PC-9 (cell line): ENCODE measurements at regions of chr12 and their contacts with region 1.

Region 1: DNA sequence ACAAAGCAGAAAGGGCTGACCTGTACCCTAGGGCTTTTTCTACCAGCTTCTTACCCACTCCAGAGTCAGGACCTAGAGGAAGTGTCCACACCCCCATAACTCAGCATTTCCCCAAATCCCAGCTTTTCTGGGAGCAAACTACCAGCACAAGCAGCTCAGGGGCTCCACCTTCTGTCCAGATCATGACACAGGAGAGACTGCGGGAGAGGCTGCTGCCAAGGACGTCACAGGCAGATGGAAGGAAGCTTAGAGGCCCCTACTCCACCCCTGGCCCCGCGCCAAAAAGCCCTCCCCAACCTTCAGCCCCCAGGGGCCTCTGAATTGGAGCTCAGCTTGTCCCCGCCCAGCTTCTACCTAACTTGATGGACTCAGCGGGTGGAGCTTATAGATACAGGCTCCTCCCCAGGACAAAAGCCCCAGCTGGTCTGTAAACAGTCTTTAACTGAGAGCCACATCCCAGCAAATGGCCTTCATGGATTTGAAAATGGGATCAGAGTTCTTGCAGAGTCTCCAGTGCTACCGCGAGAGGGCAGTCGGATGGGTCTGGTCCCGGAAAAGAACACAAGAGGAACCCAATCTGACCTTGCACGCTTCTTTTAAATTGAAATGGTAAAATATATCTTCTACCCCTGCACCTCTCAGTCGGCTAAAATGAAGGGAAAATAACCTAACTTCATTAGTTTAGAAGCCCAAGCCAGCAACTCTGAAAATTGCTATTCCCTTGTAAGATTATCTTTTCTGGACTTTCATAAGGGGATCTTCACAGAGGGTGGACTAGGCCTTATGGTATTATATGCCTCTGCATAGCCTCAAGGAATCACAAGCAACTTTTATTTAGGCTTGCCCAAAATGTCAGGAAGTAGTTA is 6.8 kb upstream of the BAZ2A start:
- DNase-seq: peak; percentile 98 to 99
- H3K4me3 ChIP-seq: peak overlapping the region; percentile 91
- H3K27ac ChIP-seq: peak overlapping the region; percentile 58
- H3K4me1 ChIP-seq: peaks cover 25% of the 10 kb centered on the region
- H3K27me3 ChIP-seq: no peaks in the 10 kb centered on the region
- CTCF ChIP-seq: peak; percentile 71

Region 2: GRCh38 chr12:55738123-55739024 is 898.5 kb before region 1 on chr12:
- CTCF ChIA-PET with region 1: no interaction called
- POLR2A ChIA-PET with region 1: no interaction called
- intact Hi-C with region 1: loop called (anchors 5 kb)
- DNase-seq: peak; percentile 68 to 71
- H3K4me3 ChIP-seq: peak overlapping the region; percentile 74
- H3K27ac ChIP-seq: no peak overlapping the region
- H3K4me1 ChIP-seq: peaks cover 12% of the 10 kb centered on the region
- H3K27me3 ChIP-seq: no peaks in the 10 kb centered on the region
- CTCF ChIP-seq: peak; percentile 90

Region 3: DNA sequence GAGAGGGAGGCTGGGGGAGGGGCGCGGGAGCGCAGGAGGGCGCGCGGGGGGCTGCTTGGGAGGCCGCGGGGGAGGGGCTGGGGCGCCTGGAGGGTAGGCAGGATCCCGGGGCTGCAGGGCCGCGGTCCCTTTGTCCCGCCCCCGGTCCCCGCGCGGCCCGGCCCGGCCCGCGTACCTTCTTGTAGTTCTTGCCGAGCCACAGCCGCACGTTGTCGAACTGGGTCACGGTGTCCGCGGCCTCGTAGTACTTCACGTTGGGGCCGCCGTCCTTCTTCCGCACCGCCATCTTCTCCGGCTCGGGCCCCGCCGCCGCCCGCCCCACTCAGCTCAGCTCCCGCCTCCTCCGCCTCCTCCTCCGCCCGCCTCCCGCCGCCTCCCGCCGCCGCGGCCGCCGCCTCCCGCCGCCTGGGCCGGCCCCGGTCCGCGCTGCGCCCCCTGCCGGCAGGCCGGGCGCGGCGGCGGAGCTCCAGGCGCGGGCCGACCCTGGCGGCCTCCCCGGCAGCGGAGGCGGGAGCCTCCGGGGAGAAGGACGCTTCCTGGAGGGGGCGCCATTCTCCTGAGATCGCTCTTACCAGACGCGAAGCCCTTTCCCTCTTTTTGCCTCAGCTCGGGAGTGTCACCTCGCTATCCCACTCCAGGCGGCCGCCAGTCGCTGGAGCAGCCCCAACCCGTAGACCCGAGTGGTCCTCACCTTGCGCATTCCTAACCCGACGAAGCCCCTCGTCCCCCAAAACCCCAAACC is 447.6 kb before region 1 on chr12 and contains the start of gene SMARCC2:
- CTCF ChIA-PET with region 1: interaction called, 7 read pairs
- POLR2A ChIA-PET with region 1: no interaction called
- intact Hi-C with region 1: loop called (anchors 10 kb)
- DNase-seq: peak; percentile 71 to 91
- H3K4me3 ChIP-seq: peak within 1 kb of the TSS; percentile 99
- H3K27ac ChIP-seq: peak within 1 kb of the TSS; percentile 85
- H3K4me1 ChIP-seq: peaks cover 28% of the 10 kb centered on the region
- H3K27me3 ChIP-seq: no peaks in the 10 kb centered on the region
- CTCF ChIP-seq: peak; percentile 68
- total RNA-seq, gene SMARCC2: 70.3 and 86.4 TPM in 2 replicates

Region 4: GRCh38 chr12:56571126-56571525 is 65.8 kb before region 1 on chr12:
- CTCF ChIA-PET with region 1: interaction called, 15 read pairs
- POLR2A ChIA-PET with region 1: no interaction called
- intact Hi-C with region 1: no loop called
- DNase-seq: no peak
- H3K4me3 ChIP-seq: no peak overlapping the region
- H3K27ac ChIP-seq: no peak overlapping the region
- H3K4me1 ChIP-seq: peaks cover 29% of the 10 kb centered on the region
- H3K27me3 ChIP-seq: no peaks in the 10 kb centered on the region
- CTCF ChIP-seq: no peak

Region 5: DNA sequence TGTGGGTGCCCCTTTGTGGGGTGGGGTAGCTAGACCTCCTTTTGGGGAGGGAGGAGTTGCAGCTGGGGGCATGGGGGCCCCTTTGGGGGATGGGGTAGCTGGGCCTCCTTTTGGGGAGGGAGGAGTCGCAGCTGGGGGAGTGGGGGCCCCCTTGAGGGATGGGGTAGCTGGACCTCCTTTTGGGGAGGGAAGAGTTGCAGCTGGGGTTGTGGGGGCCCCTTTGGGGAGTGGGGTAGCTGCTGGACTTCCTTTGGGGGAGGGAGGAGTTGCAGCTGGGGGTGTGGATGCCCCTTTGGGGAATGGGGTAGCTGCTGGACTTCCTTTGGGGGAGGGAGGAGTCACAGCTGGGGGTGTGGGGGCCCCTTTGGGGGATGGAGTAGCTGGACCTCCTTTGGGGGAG is 81.2 kb after region 1 on chr12:
- CTCF ChIA-PET with region 1: interaction called, 5 read pairs
- POLR2A ChIA-PET with region 1: interaction called, 23 read pairs
- intact Hi-C with region 1: no loop called
- DNase-seq: no peak
- H3K4me3 ChIP-seq: no peak overlapping the region
- H3K27ac ChIP-seq: no peak overlapping the region
- H3K4me1 ChIP-seq: peaks cover 46% of the 10 kb centered on the region
- H3K27me3 ChIP-seq: no peaks in the 10 kb centered on the region
- CTCF ChIP-seq: no peak

Region 6: DNA sequence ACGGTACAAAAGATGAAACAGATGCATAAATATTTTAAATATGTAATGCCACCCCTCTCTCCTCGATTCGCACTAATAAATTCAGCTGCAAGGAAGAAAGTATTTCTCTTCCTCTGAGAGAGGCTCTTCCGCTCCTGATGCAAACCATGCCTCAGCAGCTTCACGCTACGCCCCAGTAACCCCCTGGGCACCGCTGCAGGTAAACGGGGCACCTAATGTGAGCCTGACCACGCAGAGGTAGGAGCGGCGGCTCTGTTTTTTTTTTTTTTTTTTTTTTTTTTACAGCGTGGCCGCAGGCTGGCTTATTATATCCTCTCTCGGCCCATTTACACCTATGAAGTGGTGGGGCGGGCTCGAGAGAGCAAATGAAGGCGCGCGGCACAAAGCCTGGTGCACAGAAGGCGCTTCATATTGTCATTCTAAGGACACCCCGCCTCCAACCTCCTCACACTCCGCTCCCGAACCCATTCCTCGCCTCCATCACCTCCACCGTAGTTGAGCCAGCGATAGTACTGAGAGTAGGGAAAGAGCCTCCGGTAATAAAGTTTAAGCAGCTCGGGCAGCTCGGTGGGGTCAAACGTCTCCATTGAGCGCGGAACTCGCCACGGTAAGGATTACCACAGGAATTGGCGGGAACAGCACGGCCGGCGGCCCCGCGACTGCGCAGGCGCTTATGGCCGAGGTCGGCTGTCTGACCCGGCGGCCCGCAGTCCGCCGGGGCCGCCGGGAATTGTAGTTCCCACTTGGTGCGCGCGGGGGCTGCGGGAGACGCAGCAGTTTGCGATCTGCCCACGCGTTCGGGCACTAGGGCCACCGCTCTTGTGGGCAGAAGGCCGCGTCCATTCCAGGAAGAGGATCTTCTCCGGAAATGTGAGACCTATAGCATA is 115.0 kb after region 1 on chr12 and contains the start of gene PRIM1:
- CTCF ChIA-PET with region 1: no interaction called
- POLR2A ChIA-PET with region 1: interaction called, 27 read pairs
- intact Hi-C with region 1: no loop called
- DNase-seq: peak; percentile 71 to 85
- H3K4me3 ChIP-seq: peak within 1 kb of the TSS; percentile 66
- H3K27ac ChIP-seq: peak within 1 kb of the TSS; percentile 21
- H3K4me1 ChIP-seq: peaks cover 8% of the 10 kb centered on the region; the same call in 1 of the 2 replicates
- H3K27me3 ChIP-seq: no peaks in the 10 kb centered on the region
- CTCF ChIP-seq: peak; percentile 58
- total RNA-seq, gene PRIM1: 27.2 and 35.8 TPM in 2 replicates

Region 7: DNA sequence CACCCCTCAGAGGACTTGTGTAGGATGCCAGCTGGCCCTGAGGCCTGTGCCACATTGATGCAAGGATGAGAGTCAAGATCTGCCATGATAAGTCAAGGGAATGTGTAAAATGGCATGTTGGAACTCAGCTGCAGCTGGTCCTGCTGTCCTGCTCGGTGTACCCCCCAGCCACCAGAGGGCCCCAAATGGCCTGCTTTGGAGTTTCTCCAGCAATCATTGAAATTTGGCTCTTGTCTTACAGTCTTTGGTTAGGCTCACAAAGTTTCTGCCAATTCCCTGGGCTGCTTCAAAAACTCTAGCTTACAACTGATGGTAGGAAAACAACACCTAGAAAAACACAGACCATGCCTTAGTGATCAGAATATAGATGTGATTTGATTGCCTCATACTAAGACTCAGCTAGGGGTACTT is 203.0 kb after region 1 on chr12:
- CTCF ChIA-PET with region 1: no interaction called
- POLR2A ChIA-PET with region 1: no interaction called
- intact Hi-C with region 1: no loop called
- DNase-seq: peak; percentile 37 to 56
- H3K4me3 ChIP-seq: no peak overlapping the region
- H3K27ac ChIP-seq: no peak overlapping the region
- H3K4me1 ChIP-seq: no peaks in the 10 kb centered on the region
- H3K27me3 ChIP-seq: no peaks in the 10 kb centered on the region
- CTCF ChIP-seq: peak; percentile 70

Region 8: GRCh38 chr12:57088459-57089248 is 451.7 kb after region 1 on chr12 and contains the start of gene NAB2:
- CTCF ChIA-PET with region 1: no interaction called
- POLR2A ChIA-PET with region 1: no interaction called
- intact Hi-C with region 1: loop called (anchors 5 kb)
- DNase-seq: peak; percentile 82 to 95
- H3K4me3 ChIP-seq: peak within 1 kb of the TSS; percentile 94
- H3K27ac ChIP-seq: peak within 1 kb of the TSS; percentile 91
- H3K4me1 ChIP-seq: peaks cover 5% of the 10 kb centered on the region; the same call in 1 of the 2 replicates
- H3K27me3 ChIP-seq: no peaks in the 10 kb centered on the region
- CTCF ChIP-seq: no peak
- total RNA-seq, gene NAB2: 13.8 and 20.2 TPM in 2 replicates